Caco-2 (cell line): ENCODE measurements at regions of chr1 and their contacts with region 1.

Region 1: DNA sequence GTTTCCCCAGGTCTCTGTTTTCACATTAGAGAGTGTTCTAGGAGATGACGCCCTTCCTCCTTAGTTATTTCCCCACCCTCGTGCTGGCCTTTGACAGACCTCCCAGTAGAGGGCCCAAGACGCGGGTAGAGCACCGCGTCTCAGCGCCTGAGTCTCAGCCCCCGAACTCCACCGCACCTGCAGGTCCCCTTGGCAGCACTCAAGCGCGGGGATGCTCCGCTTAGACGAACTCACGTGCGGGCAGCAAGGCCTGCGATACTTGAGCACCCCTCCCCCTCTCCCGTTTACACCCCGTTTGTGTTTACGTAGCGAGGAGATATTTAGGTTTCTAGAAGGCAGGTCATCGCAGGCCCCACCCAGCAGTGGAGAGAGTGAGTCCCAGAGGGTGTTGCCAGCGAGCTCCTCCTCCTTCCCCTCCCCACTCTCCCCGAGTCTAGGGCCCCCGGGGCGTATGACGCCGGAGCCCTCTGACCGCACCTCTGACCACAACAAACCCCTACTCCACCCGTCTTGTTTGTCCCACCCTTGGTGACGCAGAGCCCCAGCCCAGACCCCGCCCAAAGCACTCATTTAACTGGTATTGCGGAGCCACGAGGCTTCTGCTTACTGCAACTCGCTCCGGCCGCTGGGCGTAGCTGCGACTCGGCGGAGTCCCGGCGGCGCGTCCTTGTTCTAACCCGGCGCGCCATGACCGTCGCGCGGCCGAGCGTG is at the start of gene CD55:
- DNase-seq: peak; percentile 99
- H3K4me3 ChIP-seq: peak within 1 kb of the TSS; percentile 80
- H3K4me3 Mint-ChIP-seq: peak within 1 kb of the TSS; percentile 83
- H3K27ac Mint-ChIP-seq: peak within 1 kb of the TSS; percentile 95
- H3K4me1 ChIP-seq: peaks cover 39% of the 10 kb centered on the region
- H3K4me1 Mint-ChIP-seq: peaks cover 17% of the 10 kb centered on the region
- H3K27me3 ChIP-seq: no peaks in the 10 kb centered on the region
- H3K27me3 Mint-ChIP-seq: no peaks in the 10 kb centered on the region
- CTCF ChIP-seq: peak; percentile 34 to 41
- total RNA-seq, gene CD55: 195 and 197 TPM in 2 replicates

Region 2: GRCh38 chr1:207115269-207115668 is 206.0 kb before region 1 on chr1:
- CTCF ChIA-PET with region 1: no interaction called
- POLR2A ChIA-PET with region 1: no interaction called
- intact Hi-C with region 1: no loop called
- DNase-seq: no peak
- H3K4me3 ChIP-seq: no peak overlapping the region
- H3K4me3 Mint-ChIP-seq: no peak overlapping the region
- H3K27ac Mint-ChIP-seq: no peak overlapping the region
- H3K4me1 ChIP-seq: no peaks in the 10 kb centered on the region
- H3K4me1 Mint-ChIP-seq: peaks cover 6% of the 10 kb centered on the region
- H3K27me3 ChIP-seq: no peaks in the 10 kb centered on the region
- H3K27me3 Mint-ChIP-seq: no peaks in the 10 kb centered on the region
- CTCF ChIP-seq: no peak

Region 3: GRCh38 chr1:207282058-207282457 is 39.2 kb before region 1 on chr1:
- CTCF ChIA-PET with region 1: no interaction called
- POLR2A ChIA-PET with region 1: no interaction called
- intact Hi-C with region 1: loop called (anchors 2 kb)
- DNase-seq: no peak
- H3K4me3 ChIP-seq: no peak overlapping the region
- H3K4me3 Mint-ChIP-seq: no peak overlapping the region
- H3K27ac Mint-ChIP-seq: peak overlapping the region; percentile 36
- H3K4me1 ChIP-seq: peaks cover 18% of the 10 kb centered on the region
- H3K4me1 Mint-ChIP-seq: peaks cover 15% of the 10 kb centered on the region
- H3K27me3 ChIP-seq: no peaks in the 10 kb centered on the region
- H3K27me3 Mint-ChIP-seq: no peaks in the 10 kb centered on the region
- CTCF ChIP-seq: no peak